ENCODE measurements at regions of chr7 and their contacts with region 1.

Region 1: DNA sequence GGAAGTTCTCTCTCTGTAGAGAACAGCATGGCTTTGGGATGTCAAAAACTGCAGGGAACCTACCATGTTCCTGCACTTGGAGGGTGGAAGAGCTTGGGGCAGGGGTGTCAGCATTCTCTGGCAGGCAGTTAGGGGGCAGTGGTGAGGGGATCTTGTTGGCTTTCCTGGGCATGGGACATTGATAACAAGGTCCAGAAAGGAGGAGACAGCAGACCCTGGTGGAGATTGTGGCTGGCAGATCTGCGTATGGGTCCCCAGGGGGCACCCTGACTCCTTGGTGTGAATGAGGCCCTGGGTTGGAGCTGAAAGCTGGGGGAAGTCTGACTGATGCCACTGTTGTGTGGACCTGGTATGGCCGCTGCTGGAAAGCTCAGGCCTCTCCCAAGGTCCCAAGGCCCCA is 22.9 kb upstream of the CAMK2B start:
- DNase-seq: peak in 1 of 2 experiments; percentile 63
- H3K4me3 ChIP-seq: no peak overlapping the region
- H3K27ac ChIP-seq: no peak overlapping the region
- H3K4me1 ChIP-seq: 0 out of 7 replicates have a peak, but pooled peaks cover 0 to 3% (median 0%) of the 10 kb centered on the region in 4 experiments
- H3K27me3 ChIP-seq: no peaks in the 10 kb centered on the region
- CTCF ChIP-seq: peak; percentile 70 to 89 (median 78)
- EP300 ChIP-seq: no peak
- POLR2A ChIP-seq: no peak
- RAD21 ChIP-seq: peak; percentile 75 to 78

Region 2: GRCh38 chr7:44322631-44323363 is 25.5 kb before region 1 on chr7:
- CTCF ChIA-PET with region 1: interaction called, 10 read pairs
- POLR2A ChIA-PET with region 1: no interaction called
- DNase-seq: peak in 1 of 2 experiments; percentile 46
- H3K4me3 ChIP-seq: no peak overlapping the region
- H3K27ac ChIP-seq: no peak overlapping the region
- H3K4me1 ChIP-seq: peaks cover 0 to 14% (median 7%) of the 10 kb centered on the region in 4 experiments; a peak in 5 of 7 replicates
- H3K27me3 ChIP-seq: peaks cover 37 to 48% (median 45%) of the 10 kb centered on the region in 4 experiments
- CTCF ChIP-seq: no peak
- EP300 ChIP-seq: no peak
- POLR2A ChIP-seq: no peak
- RAD21 ChIP-seq: no peak

Region 3: DNA sequence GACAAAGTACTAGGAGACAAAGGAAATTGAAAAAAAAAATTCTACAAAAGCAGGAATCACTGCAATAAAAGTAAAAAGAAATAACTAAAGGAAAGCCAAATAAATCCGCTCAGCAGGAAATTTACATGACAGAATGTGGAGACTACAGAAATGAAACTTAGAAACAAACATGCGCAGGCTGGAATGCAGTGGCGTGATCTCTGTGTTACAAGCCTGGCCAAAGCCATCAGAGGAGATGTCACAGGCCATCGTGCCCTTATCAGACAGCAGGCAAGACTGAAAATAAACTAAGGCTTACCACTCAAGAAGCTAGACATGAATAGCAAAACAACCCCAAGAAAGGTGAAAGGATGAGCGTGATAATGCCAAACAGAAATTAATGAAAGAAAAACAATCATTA is 16.6 kb before region 1 on chr7:
- CTCF ChIA-PET with region 1: interaction called, 19 read pairs
- POLR2A ChIA-PET with region 1: no interaction called
- DNase-seq: no peak
- H3K4me3 ChIP-seq: no peak overlapping the region
- H3K27ac ChIP-seq: no peak overlapping the region
- H3K4me1 ChIP-seq: no peaks in the 10 kb centered on the region; a peak in 1 of 7 replicates
- H3K27me3 ChIP-seq: peaks cover 6 to 15% (median 11%) of the 10 kb centered on the region in 4 experiments
- CTCF ChIP-seq: no peak
- EP300 ChIP-seq: no peak
- POLR2A ChIP-seq: no peak
- RAD21 ChIP-seq: no peak

Region 4: DNA sequence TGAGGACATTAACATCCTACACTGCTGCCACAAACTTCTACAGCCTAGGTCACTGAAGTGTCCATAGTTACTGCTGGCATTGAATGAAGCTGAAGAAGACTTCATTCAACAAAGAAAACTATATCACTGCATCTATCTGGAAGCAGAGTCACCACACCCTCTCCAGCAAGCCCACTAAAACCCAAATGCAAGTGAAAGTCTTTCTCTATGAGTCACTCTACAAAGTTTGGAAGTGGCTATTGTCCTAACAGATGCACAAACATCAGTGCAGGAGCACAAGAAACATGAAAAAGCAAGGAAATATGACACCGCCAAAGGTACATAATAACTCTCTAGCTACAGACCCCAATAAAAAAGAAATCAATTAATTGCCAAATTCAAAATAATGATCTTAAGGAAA is 20.6 kb after region 1 on chr7:
- CTCF ChIA-PET with region 1: interaction called, 14 read pairs
- POLR2A ChIA-PET with region 1: interaction called, 3 read pairs
- DNase-seq: no peak
- H3K4me3 ChIP-seq: no peak overlapping the region
- H3K27ac ChIP-seq: no peak overlapping the region
- H3K4me1 ChIP-seq: no peaks in the 10 kb centered on the region
- H3K27me3 ChIP-seq: no peaks in the 10 kb centered on the region; a peak in 2 of 7 replicates
- CTCF ChIP-seq: no peak
- EP300 ChIP-seq: no peak
- POLR2A ChIP-seq: no peak
- RAD21 ChIP-seq: no peak

Region 5: DNA sequence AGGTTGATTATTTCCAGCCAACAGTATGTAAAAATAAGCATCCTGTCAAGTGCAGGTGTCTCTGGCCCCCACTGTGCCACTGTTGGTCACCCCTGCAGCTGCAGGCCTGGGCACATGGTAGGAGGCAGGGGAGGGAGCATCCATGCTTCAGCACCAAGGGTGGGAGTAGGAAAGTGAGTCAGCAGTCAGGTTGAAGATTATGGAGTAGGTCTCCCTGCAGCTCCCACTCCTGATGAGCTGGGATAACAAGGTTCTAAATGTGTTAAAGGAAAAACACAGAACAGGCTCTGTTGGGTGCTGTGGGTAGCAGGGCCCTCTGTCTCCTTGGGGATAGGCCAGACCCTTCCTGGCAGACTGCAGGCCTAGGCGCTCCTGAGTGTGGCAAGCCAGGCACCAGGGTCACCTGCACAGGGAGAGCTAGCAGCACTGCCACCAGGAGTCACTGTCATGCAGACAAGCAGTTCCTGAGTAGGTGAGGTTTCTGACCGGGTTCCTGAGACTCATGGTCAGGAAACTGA is 82.8 kb after region 1 on chr7:
- CTCF ChIA-PET with region 1: interaction called, 12 read pairs
- POLR2A ChIA-PET with region 1: no interaction called
- DNase-seq: peak; percentile 15 to 60
- H3K4me3 ChIP-seq: no peak overlapping the region
- H3K27ac ChIP-seq: no peak overlapping the region
- H3K4me1 ChIP-seq: 0 out of 7 replicates have a peak, but pooled peaks cover 0 to 5% (median 0%) of the 10 kb centered on the region in 4 experiments
- H3K27me3 ChIP-seq: no peaks in the 10 kb centered on the region
- CTCF ChIP-seq: peak; percentile 51 to 71 (median 68)
- EP300 ChIP-seq: no peak
- POLR2A ChIP-seq: no peak
- RAD21 ChIP-seq: peak; percentile 48 to 61

Region 6: DNA sequence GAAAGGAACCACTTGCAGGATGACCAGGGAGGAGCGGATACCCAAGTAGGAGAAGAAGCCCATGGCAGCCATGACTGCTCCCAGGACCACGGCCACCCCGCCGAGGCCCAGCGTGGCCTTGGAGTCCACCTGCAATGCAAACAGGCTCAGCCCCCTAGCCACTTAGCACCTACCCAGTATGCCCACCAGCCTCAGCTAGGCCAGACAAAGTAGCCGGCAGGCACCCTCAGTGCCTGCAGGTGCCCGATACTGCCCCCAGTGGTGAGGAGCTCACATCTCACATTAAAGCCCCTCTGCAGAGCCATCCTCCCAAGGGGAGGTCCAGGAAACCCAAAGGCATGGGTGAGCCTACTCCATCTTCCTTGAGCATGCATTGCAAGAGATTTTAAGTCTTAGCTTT is 186.2 kb after region 1 on chr7:
- CTCF ChIA-PET with region 1: interaction called, 19 read pairs
- POLR2A ChIA-PET with region 1: no interaction called
- DNase-seq: peak; percentile 39 to 85
- H3K4me3 ChIP-seq: no peak overlapping the region
- H3K27ac ChIP-seq: no peak overlapping the region
- H3K4me1 ChIP-seq: no peaks in the 10 kb centered on the region
- H3K27me3 ChIP-seq: no peaks in the 10 kb centered on the region
- CTCF ChIP-seq: peak; percentile 83 to 97 (median 84)
- EP300 ChIP-seq: no peak
- POLR2A ChIP-seq: no peak
- RAD21 ChIP-seq: peak; percentile 56 to 69

Region 7: GRCh38 chr7:44638611-44639557 is 290.6 kb after region 1 on chr7:
- CTCF ChIA-PET with region 1: no interaction called
- POLR2A ChIA-PET with region 1: no interaction called
- DNase-seq: peak in 1 of 2 experiments; percentile 48
- H3K4me3 ChIP-seq: no peak overlapping the region
- H3K27ac ChIP-seq: no peak overlapping the region
- H3K4me1 ChIP-seq: peaks cover 16 to 19% (median 18%) of the 10 kb centered on the region in 4 experiments
- H3K27me3 ChIP-seq: no peaks in the 10 kb centered on the region
- CTCF ChIP-seq: no peak
- EP300 ChIP-seq: no peak
- POLR2A ChIP-seq: no peak
- RAD21 ChIP-seq: no peak